Right lobe of liver (tissue), 6 donors: ENCODE measurements at regions of chr11 and their contacts with region 1.

Region 1: GRCh38 chr11:65366340-65366773 is 11.8 kb downstream of the TIGD3 start:
- DNase-seq: no peak
- ATAC-seq: peak; percentile 75 to 91 (median 86)
- H3K4me3 ChIP-seq: no peak overlapping the region
- H3K27ac ChIP-seq: no peak overlapping the region
- H3K4me1 ChIP-seq: peaks cover 0 to 7% (median 3%) of the 10 kb centered on the region in 4 donors
- H3K27me3 ChIP-seq: no peaks in the 10 kb centered on the region
- CTCF ChIP-seq: peak; percentile 68 to 88 (median 77)
- POLR2A ChIP-seq: no peak

Region 2: DNA sequence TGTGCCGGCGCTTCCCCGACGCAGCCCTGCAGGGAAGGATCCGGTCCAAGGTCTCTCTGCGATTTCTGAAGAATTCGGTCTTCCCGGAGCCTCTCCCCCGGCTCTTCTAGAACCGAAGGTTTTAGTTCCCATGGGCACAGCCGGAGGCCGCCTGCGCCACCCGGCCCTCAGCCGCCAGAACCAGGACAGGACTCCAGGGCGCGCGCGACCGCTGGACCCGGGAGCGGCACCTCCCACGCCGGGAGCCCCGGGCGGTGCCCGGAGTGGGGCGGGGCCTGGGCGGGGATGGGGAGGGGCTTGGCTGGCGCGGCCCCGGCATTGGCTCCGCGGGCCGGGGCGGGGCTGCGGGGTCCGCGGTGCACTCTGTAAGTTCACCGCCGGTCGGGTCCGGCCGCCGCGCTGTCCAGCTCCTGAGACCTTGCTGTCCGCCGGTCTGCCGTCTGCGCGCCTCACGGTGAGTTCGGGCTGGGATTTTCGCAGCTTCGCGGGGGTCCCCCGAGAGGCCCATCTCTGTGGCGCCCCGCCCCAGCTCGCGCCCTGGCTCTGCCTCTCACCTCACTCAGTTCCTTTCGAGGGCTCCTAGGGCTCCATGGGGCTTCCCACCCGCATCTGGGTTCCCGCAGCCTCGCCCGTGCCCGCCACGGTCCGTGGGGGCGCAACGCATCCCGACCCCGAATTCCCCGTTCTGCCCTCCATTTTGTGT is 51.7 kb before region 1 on chr11 and contains the start of gene CDC42EP2:
- intact Hi-C with region 1: no loop called
- DNase-seq: peak; percentile 94 to 95 (median 94)
- ATAC-seq: peak; percentile 91 to 97 (median 94)
- H3K4me3 ChIP-seq: peak within 1 kb of the TSS; percentile 46 to 84 (median 84)
- H3K27ac ChIP-seq: peak within 1 kb of the TSS; percentile 74 to 76 (median 75)
- H3K4me1 ChIP-seq: peaks cover 0 to 6% (median 0%) of the 10 kb centered on the region in 4 donors
- H3K27me3 ChIP-seq: no peaks in the 10 kb centered on the region
- CTCF ChIP-seq: no peak
- POLR2A ChIP-seq: peak; percentile 68
- total RNA-seq, gene CDC42EP2: 0.55 to 3.4 (median 2.3) TPM

Region 3: DNA sequence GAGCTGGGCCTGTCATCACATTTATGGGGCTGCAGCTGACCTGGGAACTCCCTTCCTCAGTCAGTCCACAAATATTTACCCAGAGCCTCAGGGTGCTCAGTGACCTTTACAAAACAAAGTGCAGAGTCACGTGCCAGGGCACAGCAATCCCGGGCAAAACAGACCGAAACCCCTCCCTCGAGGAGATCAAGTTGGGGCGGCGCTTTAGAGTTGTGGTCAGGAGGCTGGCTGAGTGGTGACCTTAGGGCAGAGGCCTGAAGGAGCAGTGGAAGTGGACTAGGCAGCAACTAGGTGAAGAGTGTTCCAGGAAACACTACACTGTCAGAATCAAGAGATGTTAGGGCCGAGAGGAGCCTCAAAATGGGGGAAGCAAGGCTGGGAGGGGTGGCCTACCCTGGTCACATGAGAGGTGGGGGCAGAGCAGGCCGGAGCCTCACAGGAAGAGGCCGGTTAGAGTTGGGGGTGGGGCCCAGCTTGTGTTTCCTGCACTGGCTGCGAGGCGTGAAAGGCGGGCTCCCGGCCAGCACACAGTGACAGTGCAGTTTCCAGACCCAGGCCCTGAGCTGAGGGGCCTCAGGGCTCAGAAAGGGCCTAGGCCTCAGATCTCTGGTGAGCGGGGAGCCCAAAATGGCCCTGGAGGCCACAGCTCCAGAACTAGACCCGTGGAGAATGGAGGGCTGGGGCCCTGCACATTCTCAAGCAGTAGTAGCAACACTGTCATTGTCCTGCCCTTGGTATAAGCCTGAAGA is 52.5 kb after region 1 on chr11:
- intact Hi-C with region 1: loop called (anchors 10 kb)
- DNase-seq: peak; percentile 98 to 99 (median 98)
- ATAC-seq: peak; percentile 19 to 48 (median 32)
- H3K4me3 ChIP-seq: peak overlapping the region; percentile 22 to 87 (median 40)
- H3K27ac ChIP-seq: peak overlapping the region; percentile 97 to 100 (median 100)
- H3K4me1 ChIP-seq: peaks cover 0 to 44% (median 16%) of the 10 kb centered on the region in 4 donors
- H3K27me3 ChIP-seq: no peaks in the 10 kb centered on the region
- CTCF ChIP-seq: no peak
- POLR2A ChIP-seq: peak; percentile 77

Region 4: DNA sequence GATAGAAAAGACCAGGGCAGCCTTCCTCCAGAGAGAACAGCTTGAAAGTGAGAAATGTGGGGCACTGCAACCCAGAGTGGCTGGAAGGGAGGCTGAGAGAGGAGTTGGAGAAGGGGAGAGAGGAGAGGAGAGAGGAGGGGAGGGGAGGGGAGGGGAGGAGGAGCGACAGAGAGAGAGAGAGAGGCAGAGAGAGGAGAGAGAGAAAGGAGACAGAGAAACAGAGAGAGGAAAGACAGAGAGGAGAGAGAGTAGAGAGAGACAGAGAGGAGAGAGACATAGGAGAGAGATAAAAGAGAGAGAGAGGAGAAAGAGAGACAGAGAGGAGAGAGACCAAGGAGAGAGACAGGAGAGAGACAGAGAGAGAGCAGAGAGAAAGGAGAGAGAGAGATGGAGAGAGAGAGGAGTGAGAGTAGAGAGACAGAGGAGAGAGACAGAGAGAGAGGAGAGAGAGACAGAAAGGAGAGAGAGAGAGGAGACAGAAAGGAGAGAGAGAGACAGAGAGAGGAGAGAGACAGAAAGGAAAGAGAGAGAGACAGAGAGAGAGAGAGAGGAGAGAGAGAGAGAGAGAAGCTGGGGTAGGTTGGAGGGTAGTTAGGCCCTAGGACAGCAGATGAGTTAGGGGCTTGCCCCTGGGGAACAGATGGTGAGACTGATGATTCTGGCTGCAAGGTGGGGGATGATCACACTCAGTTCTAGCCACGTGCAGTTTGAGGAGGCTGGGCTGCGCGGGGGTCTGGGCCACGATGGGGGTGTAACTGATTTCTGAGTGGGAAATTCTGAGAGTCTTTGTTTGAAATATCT is 150.0 kb after region 1 on chr11:
- intact Hi-C with region 1: loop called (anchors 5 kb)
- DNase-seq: peak in 1 of 3 donors; percentile 32
- ATAC-seq: peak in 1 of 4 donors; percentile 36
- H3K4me3 ChIP-seq: no peak overlapping the region
- H3K27ac ChIP-seq: no peak overlapping the region
- H3K4me1 ChIP-seq: no peaks in the 10 kb centered on the region
- H3K27me3 ChIP-seq: no peaks in the 10 kb centered on the region
- CTCF ChIP-seq: no peak
- POLR2A ChIP-seq: no peak